ENCODE measurements at regions of chr17 and their contacts with region 1.

Region 1: DNA sequence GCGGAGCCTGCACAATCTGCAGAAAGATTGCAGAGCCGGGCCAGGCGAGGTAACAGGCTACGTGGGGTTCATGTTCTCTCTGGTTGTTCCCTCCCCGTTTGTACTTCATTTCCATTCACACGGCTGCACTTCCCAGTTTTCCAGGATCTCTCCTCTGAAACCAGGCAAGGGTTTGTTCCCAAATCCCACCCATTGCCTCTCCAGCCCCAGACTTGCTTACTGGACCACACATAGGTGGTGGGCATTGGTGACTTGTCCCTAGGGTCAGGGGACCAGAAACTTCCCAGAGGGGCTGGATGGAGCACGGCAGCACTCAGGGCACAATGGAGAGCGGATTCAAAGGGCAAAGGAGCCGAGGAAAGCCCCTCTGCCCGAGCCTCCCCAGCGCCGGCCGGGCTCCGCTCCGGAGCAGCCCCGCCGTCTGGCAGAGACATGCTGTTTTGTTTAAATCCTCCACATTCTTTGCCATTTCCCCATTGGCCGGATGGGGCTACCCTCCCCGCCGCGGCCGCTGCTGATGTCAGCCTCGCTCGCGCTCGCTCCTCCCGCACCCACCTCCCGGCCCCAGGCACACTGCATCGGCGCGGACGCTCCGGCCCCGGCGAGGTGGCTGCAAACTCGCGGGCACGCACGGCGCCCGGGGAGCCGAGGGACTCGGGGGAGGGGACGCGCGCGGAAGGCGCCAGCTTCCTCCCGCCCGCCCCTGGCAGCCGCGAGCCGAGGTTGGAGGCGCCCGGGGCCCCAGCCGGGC is at the start of gene PITPNC1:
- DNase-seq: peak; percentile 91
- H3K4me3 ChIP-seq: peak within 1 kb of the TSS; percentile 58 to 85 (median 78)
- H3K27ac ChIP-seq: peak within 1 kb of the TSS; percentile 91 to 96 (median 93)
- H3K4me1 ChIP-seq: peaks cover 0 to 26% (median 19%) of the 10 kb centered on the region in 4 donors
- H3K27me3 ChIP-seq: no peaks in the 10 kb centered on the region
- CTCF ChIP-seq: no peak
- EP300 ChIP-seq: no peak
- POLR2A ChIP-seq: peak; percentile 28 to 44
- total RNA-seq, gene PITPNC1: 3.6 to 14.7 (median 7.8) TPM

Region 2: GRCh38 chr17:67336859-67337258 is 40.1 kb before region 1 on chr17:
- intact Hi-C with region 1: no loop called
- DNase-seq: no peak
- H3K4me3 ChIP-seq: no peak overlapping the region
- H3K27ac ChIP-seq: no peak overlapping the region
- H3K4me1 ChIP-seq: no peaks in the 10 kb centered on the region
- H3K27me3 ChIP-seq: no peaks in the 10 kb centered on the region
- CTCF ChIP-seq: no peak
- EP300 ChIP-seq: no peak
- POLR2A ChIP-seq: no peak

Region 3: DNA sequence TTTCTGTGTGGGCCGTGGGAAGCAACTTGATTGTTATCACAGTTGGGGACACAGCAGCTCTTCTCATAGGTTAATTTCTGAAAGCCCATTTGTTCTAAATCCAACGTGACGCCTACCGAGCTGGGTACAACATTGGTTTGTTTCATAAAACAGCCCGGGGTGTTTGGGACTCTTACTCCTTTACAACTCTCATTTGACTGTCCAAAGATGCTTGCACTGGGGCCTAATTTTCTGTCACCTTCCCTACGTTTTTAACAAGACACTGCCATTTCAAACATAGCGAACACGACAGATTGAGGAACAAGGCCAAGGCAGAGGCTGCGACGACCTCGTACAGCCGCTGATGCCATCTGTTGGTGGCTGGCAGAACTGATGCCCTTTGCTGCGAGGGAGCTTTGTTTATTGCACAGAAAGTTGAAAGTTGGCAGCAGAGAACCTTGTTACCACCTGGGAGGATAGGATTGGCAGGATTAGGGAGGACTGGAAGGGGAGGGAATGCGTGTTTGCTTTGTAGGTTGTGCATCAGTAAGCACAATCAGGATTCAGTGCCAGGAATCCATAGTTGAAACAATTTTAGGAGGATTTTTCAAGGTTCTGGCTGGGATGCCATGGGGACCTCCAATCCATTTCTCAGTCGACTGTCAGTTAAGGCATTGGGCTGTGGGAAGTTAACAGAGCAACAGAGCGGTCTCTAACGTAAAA is 98.5 kb after region 1 on chr17:
- intact Hi-C with region 1: loop called (anchors 1 kb)
- DNase-seq: peak; percentile 82
- H3K4me3 ChIP-seq: no peak overlapping the region
- H3K27ac ChIP-seq: peak overlapping the region; percentile 14 to 66 (median 36)
- H3K4me1 ChIP-seq: peaks cover 0 to 15% (median 4%) of the 10 kb centered on the region in 4 donors
- H3K27me3 ChIP-seq: no peaks in the 10 kb centered on the region
- CTCF ChIP-seq: peak; percentile 46 to 86 (median 80)
- EP300 ChIP-seq: no peak
- POLR2A ChIP-seq: no peak

Region 4: DNA sequence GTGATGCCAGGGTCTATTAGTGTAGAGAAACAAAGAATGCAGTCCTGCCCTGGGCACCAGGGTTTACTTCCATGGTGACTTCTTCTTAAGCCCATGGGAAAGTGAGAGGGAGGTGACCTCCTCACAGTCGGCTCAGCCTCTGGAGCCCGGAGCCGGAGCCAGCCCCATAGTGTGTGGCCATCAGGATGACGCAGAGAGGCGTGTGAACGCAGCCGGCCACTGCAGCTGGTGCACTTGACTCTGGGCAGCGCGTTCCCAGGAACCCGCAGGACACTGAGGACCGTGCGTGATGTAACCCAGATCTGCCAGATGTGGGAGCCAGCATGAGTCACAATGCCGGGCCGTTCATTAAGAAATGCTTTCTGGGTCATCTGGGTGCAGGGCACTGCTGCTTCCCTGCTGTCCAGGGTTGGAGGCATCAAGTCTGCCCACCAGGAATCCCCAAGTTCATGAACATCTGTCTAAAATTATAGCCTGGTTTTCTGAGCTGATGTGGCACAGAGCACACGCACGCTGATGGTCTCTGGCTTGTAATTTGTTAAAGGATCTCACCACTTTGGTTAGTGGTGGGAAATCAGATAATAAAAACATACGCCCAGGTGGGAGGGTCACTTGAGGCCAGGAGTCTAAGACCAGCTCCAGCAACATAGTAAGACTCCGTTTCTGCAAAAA is 114.2 kb after region 1 on chr17:
- intact Hi-C with region 1: loop called (anchors 5 kb)
- DNase-seq: peak; percentile 98
- H3K4me3 ChIP-seq: peak overlapping the region in 3 of 4 donors; percentile 23 to 37 (median 29)
- H3K27ac ChIP-seq: peak overlapping the region; percentile 63 to 84 (median 79)
- H3K4me1 ChIP-seq: peaks cover 0 to 32% (median 28%) of the 10 kb centered on the region in 4 donors
- H3K27me3 ChIP-seq: no peaks in the 10 kb centered on the region
- CTCF ChIP-seq: no peak
- EP300 ChIP-seq: peak; percentile 92 to 98 (median 95)
- POLR2A ChIP-seq: peak in 1 of 2 donors; percentile 24

Region 5: GRCh38 chr17:67629971-67630320 is 253.0 kb after region 1 on chr17:
- intact Hi-C with region 1: loop called (anchors 5 kb)
- DNase-seq: no peak
- H3K4me3 ChIP-seq: no peak overlapping the region
- H3K27ac ChIP-seq: peak overlapping the region in 1 of 4 donors; percentile 27
- H3K4me1 ChIP-seq: peaks cover 0 to 5% (median 0%) of the 10 kb centered on the region in 4 donors
- H3K27me3 ChIP-seq: no peaks in the 10 kb centered on the region
- CTCF ChIP-seq: no peak
- EP300 ChIP-seq: no peak
- POLR2A ChIP-seq: no peak

Region 6: DNA sequence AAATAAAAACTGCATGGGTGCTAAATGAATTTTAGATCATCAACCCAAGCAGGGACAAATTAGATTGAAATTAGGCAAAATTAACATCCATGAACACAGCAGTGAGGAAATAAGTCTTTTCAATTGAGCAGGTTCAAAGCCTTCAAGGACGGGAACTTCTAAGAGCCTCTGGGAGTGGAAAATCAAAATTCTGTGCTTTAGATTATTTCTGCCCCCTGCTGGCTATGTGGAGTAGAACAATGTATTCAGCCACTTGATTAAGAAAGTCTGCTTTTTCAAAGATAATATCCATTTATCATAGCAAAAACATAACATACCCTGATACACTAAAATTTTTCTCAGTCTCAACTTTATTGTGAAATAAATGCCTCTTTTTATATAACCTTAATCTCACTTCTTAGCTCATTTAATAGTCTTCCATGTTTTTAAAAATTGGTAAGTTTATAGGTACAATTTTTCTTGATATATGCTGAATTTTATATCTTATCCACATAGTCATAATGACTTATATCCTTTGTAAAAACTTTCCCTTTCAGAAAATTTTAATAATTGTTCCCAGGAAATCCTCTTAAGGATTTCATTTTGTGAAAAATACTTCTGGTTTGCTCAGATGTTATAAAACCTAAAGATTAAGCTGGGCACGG is 312.7 kb after region 1 on chr17:
- intact Hi-C with region 1: loop called (anchors 1 kb)
- DNase-seq: no peak
- H3K4me3 ChIP-seq: no peak overlapping the region
- H3K27ac ChIP-seq: no peak overlapping the region
- H3K4me1 ChIP-seq: no peaks in the 10 kb centered on the region
- H3K27me3 ChIP-seq: no peaks in the 10 kb centered on the region
- CTCF ChIP-seq: peak; percentile 42 to 78 (median 70)
- EP300 ChIP-seq: no peak
- POLR2A ChIP-seq: no peak